SK-N-SH (cell line): ENCODE measurements at regions of chr3 and their contacts with region 1.

Region 1: GRCh38 chr3:149765762-149766334 is 13.6 kb upstream of the COMMD2 start:
- DNase-seq: peak; percentile 9
- H3K4me3 ChIP-seq: no peak overlapping the region
- H3K27ac ChIP-seq: no peak overlapping the region
- H3K4me1 ChIP-seq: no peaks in the 10 kb centered on the region
- H3K27me3 ChIP-seq: no peaks in the 10 kb centered on the region; the same call in 1 of the 2 replicates
- CTCF ChIP-seq: peak; percentile 71
- EP300 ChIP-seq: no peak
- RAD21 ChIP-seq: peak; percentile 72

Region 2: DNA sequence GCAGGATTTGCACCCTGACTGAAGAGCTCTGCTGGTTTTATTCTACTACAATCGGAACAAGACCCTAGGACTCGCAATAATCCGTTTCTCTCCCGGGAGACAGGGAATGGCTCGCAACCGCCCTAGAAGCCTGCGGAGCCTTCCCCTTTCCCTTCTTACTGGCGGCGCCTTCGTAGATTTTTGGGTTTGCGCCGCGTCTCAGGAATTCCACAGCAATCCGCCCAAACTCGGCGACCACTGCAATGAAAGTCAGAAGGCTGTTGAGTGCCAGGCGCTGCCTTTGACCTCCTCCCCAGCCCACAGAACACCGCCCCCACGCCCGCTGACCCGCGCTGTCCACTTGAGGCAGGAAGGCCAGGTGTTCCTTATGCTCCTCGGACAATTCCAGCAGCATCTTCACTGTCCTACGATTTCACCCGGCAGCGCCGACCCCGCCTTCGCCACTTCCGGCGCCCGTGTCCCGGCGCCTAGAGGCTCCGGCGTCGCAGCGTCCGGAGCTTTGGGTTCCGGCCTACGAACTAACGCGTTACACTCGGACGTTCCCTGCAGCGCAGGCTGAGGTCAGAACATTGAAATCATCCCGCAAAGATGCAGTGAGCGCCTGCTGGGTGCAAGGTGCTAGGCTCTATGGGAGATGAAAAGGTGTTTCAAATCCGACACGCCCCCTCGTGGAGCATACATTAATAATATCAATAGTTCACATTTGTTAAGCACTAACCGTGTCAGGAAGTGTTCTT is 13.6 kb before region 1 on chr3 and contains the start of gene COMMD2:
- CTCF ChIA-PET with region 1: interaction called, 14 read pairs
- POLR2A ChIA-PET with region 1: no interaction called
- DNase-seq: peak; percentile 82
- H3K4me3 ChIP-seq: peak within 1 kb of the TSS; percentile 96
- H3K27ac ChIP-seq: peak within 1 kb of the TSS; percentile 59 to 74; a peak in 3 of 4 replicates
- H3K4me1 ChIP-seq: peaks cover 0 to 5% of the 10 kb centered on the region in 2 experiments; a peak in 3 of 4 replicates
- H3K27me3 ChIP-seq: no peaks in the 10 kb centered on the region
- CTCF ChIP-seq: peak; percentile 53
- EP300 ChIP-seq: peak in 1 of 2 experiments; percentile 22; a peak in 1 of 4 replicates
- RAD21 ChIP-seq: peak; percentile 41
- polyA plus RNA-seq, gene COMMD2: 20.9 and 21.3 TPM in 2 replicates

Region 3: DNA sequence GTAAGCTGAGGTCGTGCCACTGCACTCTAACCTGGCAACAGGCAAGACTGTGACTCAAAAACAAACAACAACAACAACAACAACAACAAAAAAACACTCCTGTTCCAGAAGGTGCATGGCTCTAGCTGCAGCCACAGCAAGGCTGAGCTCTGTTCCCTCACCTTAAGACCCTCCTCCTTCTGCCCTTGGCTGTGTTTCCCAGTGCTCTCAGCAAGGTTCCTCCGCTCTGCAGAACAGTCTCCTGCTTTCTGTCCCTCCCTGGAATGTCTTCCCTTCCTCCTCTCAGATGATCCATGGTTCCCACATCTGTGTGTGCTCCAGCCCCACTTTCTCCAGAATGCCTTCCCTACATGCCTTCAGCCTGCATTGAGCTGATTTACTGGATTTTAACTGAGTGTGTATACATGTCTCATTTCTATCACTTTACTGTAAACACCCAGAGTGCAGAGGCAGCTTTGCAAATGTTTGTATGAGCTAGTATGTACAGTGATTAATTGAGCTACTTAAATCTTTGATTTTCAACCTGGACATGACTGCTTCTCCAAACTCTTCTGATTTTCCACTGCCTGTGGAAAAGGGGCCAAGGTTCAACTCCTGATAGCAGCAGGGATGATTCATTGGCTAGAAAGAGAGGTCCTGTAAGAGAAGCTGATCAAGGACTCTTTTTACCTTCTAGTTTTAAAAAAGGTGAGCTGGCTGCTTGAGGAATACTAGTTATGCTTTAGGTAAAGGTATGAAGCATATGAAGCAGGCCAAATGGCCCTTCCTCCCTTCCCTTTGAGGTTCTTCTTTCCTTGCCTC is 11.8 kb after region 1 on chr3:
- CTCF ChIA-PET with region 1: interaction called, 27 read pairs
- POLR2A ChIA-PET with region 1: no interaction called
- DNase-seq: no peak
- H3K4me3 ChIP-seq: no peak overlapping the region
- H3K27ac ChIP-seq: no peak overlapping the region
- H3K4me1 ChIP-seq: no peaks in the 10 kb centered on the region
- H3K27me3 ChIP-seq: no peaks in the 10 kb centered on the region
- CTCF ChIP-seq: no peak
- EP300 ChIP-seq: no peak
- RAD21 ChIP-seq: no peak